Astrocyte of the cerebellum (primary cell): ENCODE measurements at regions of chr11 and their contacts with region 1.

Region 1: GRCh38 chr11:9396752-9397151 is 12.3 kb downstream of the IPO7 start:
- DNase-seq: no peak
- H3K4me3 ChIP-seq: no peak overlapping the region
- CTCF ChIP-seq: no peak

Region 2: DNA sequence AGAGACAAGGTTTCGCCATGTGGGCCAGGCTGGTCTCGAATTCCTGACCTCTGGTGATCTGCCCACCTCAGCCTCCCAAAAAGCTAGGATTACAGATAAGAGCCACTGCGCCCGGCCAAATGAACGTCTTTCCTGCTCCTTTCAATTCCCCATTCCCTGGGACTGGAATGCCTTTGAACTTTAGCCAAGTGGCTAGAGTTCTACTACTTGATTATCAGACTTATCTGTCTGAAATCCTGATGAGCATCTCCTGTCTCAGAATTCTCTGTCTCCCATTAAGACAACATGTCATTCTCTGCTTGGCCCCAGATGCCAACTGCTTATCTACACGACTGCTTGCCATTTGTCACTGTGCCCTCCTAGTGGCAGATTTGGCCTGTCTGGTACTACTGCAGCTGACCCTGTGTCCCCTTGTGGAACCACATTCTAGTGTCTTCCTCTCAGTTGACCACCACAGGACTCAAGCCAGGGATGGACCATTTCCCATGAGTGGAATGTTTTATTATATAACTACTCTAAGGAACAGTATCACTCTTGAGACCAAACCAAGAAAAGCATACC is 45.4 kb before region 1 on chr11:
- in situ Hi-C with region 1: no loop called
- DNase-seq: no peak
- H3K4me3 ChIP-seq: no peak overlapping the region
- CTCF ChIP-seq: no peak

Region 3: DNA sequence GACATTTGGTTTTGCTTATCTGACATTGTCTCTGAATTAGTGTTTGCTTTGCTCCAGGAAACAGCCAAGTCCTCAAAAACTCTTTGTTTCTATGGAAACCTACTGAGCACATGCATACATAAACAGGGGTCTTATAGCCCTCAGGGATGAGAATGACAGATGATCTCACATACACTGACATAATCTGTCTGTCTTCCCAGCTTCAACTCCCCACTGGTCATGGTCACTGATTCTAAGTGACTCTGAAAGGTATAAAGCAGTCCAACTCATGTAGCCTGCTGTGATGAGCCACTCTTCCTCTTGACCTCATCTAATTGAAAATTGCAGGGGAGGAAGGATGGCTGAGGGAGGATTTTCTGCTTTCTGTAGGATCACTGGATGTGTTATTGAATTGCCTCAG is 76.7 kb after region 1 on chr11:
- in situ Hi-C with region 1: loop called (anchors 5 kb)
- DNase-seq: no peak
- H3K4me3 ChIP-seq: no peak overlapping the region
- CTCF ChIP-seq: no peak